ENCODE measurements at regions of chr13 and their contacts with region 1.

Region 1: GRCh38 chr13:100875392-100876043 is 200.9 kb upstream of the TMTC4 start:
- DNase-seq: no peak
- H3K4me3 Mint-ChIP-seq: no peak overlapping the region
- H3K27ac Mint-ChIP-seq: peak overlapping the region; percentile 42
- H3K4me1 Mint-ChIP-seq: peaks cover 14% of the 10 kb centered on the region
- H3K27me3 Mint-ChIP-seq: peaks cover 28% of the 10 kb centered on the region

Region 2: GRCh38 chr13:100129605-100130004 is 745.9 kb before region 1 on chr13:
- CTCF ChIA-PET with region 1: no interaction called
- POLR2A ChIA-PET with region 1: no interaction called
- intact Hi-C with region 1: loop called (anchors 5 kb)
- DNase-seq: no peak
- H3K4me3 Mint-ChIP-seq: no peak overlapping the region
- H3K27ac Mint-ChIP-seq: no peak overlapping the region
- H3K4me1 Mint-ChIP-seq: peaks cover 22% of the 10 kb centered on the region
- H3K27me3 Mint-ChIP-seq: no peaks in the 10 kb centered on the region